Right cardiac atrium (tissue), 5 donors: ENCODE measurements at regions of chr19 and their contacts with region 1.

Region 1: GRCh38 chr19:32053376-32053775 is 292.0 kb upstream of the ZNF507 start:
- DNase-seq: no peak
- ATAC-seq: no peak
- H3K4me3 ChIP-seq: no peak overlapping the region
- H3K27ac ChIP-seq: no peak overlapping the region
- H3K4me1 ChIP-seq: no peaks in the 10 kb centered on the region
- H3K27me3 ChIP-seq: no peaks in the 10 kb centered on the region

Region 2: DNA sequence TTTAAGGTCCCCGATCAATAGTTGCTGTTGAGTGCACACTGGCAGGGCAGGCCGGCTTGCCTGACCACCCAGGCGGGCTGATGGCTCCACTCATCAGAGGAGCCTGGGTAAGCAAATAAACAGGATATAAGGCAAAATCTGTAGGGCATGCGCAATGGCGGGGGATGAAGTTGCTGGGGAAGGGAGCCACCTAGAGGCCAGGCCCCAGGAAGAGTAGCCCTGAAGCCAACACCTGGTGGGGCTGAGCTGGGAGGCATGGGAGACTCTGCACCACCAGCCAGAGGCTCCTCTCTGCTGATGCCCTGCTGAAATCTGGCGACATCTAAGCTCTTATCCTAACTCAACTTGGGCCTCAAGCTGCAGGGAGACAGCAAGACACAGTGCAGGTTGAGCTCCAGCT is 1356.9 kb before region 1 on chr19:
- intact Hi-C with region 1: loop called in 1 of 4 experiments (anchors 10 kb)
- DNase-seq: no peak
- ATAC-seq: peak; percentile 43 to 57
- H3K4me3 ChIP-seq: no peak overlapping the region
- H3K27ac ChIP-seq: no peak overlapping the region
- H3K4me1 ChIP-seq: peaks cover 3% of the 10 kb centered on the region
- H3K27me3 ChIP-seq: no peaks in the 10 kb centered on the region